ENCODE measurements at regions of chr1 and their contacts with region 1.

Region 1: DNA sequence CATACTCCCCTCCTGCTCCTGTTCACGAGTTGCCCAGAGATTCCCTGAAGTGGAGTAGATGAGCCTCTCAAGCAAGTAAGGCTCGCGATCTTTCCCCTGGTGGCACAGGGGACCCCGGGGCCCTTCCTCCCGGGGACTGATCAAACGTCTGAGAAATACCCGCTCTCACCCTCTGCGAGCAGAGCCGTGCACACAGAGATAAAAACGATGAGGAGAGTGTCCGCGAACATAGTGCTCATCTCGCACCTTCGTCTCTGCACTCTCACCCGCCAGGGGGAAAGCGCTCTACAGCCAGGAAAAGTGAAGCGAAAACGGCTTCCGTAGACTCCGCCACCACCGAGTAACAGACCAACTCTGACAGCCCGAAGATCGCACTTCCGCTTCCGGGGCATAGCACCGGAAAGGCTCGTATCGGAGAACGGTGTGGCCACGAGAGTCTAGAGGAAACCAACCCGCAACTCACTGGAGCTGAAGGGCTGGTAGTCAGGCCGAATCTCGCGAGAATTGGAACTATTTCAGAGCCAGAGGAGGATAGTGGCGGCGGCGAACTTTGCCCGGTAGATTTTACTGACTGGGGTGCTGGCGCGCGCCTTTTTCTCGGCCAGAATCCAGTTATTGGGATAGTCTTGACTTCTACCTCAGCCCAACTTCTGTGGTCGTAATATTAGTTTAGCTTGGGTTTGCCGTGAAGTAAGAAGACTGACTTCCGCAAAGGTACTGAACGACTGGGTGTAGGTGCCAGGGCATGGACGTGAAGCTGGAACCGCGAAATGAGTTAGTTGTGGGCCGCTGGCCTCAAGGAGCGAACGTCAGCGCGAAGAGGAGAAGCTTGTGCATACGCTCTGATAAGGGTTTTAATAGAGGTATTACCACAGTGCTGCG is at the start of gene TMCO1:
- DNase-seq: peak; percentile 96
- ATAC-seq: peak; percentile 99
- H3K4me3 Mint-ChIP-seq: peak within 1 kb of the TSS; percentile 92
- H3K27ac Mint-ChIP-seq: peak within 1 kb of the TSS; percentile 99
- H3K4me1 Mint-ChIP-seq: peaks cover 54% of the 10 kb centered on the region
- H3K27me3 Mint-ChIP-seq: no peaks in the 10 kb centered on the region
- total RNA-seq, gene TMCO1: 57.7 to 70.5 TPM

Region 2: GRCh38 chr1:165827268-165828102 is 58.7 kb after region 1 on chr1 and contains the start of gene UCK2:
- CTCF ChIA-PET with region 1: interaction called, 5 read pairs
- POLR2A ChIA-PET with region 1: interaction called, 9 read pairs
- intact Hi-C with region 1: loop called (anchors 1 kb)
- DNase-seq: peak; percentile 83
- ATAC-seq: peak; percentile 76
- H3K4me3 Mint-ChIP-seq: peak within 1 kb of the TSS; percentile 96
- H3K27ac Mint-ChIP-seq: peak within 1 kb of the TSS; percentile 92
- H3K4me1 Mint-ChIP-seq: peaks cover 13% of the 10 kb centered on the region
- H3K27me3 Mint-ChIP-seq: no peaks in the 10 kb centered on the region
- total RNA-seq, gene UCK2: 69.4 to 81.5 TPM

Region 3: DNA sequence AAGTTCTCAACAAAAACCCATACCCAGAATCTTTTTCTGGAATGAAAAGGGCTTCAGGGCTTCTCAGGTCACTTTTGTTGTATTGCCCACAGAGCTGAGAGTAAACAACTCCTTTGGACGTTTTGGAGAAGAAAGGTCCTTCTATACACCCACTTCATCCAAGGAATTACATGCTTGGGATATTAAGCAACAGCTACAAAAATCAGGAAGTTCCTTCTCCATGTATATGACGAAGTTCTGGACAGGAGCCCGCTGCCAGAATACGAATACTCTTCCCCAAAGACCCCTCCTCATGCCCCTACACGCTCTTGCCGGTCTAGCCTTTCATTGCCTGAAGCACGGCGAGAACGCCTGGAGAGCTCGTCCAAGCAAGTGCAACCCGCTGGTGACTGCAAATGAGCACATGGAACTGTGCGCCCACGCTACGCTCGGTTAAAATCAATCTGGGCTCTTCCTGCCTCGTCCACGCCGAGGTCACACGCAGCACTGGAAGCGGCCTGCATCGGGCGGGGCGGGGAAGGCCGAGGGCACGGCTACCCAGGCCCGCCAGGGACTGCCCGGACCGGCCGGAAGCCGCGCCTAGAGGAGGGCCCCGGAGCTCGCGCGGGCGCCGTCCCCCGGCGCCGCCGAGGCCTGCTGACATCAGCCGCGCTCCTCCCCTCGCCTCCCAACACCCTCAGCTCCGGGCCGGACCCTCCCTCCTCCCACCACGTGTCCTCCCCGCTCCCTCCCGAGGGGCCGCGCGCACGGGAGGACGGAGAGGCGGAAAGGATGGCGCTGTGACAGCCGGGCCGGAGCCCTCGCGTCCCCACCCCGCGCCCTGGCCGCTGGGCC is 1070.2 kb after region 1 on chr1 and contains the start of gene POGK:
- CTCF ChIA-PET with region 1: no interaction called
- POLR2A ChIA-PET with region 1: no interaction called
- intact Hi-C with region 1: loop called in 1 of 2 experiments (anchors 2 kb)
- DNase-seq: peak; percentile 93
- ATAC-seq: peak; percentile 97
- H3K4me3 Mint-ChIP-seq: peak within 1 kb of the TSS; percentile 90
- H3K27ac Mint-ChIP-seq: peak within 1 kb of the TSS; percentile 98
- H3K4me1 Mint-ChIP-seq: peaks cover 56% of the 10 kb centered on the region
- H3K27me3 Mint-ChIP-seq: no peaks in the 10 kb centered on the region
- total RNA-seq, gene POGK: 36.2 to 40.6 TPM

Region 4: GRCh38 chr1:166875734-166876539 is 1107.2 kb after region 1 on chr1 and contains the start of gene TADA1:
- CTCF ChIA-PET with region 1: no interaction called
- POLR2A ChIA-PET with region 1: interaction called, 5 read pairs
- intact Hi-C with region 1: loop called in 1 of 2 experiments (anchors 1 kb)
- DNase-seq: peak; percentile 100
- ATAC-seq: peak; percentile 91
- H3K4me3 Mint-ChIP-seq: peak within 1 kb of the TSS; percentile 92
- H3K27ac Mint-ChIP-seq: peak within 1 kb of the TSS; percentile 97
- H3K4me1 Mint-ChIP-seq: peaks cover 45% of the 10 kb centered on the region
- H3K27me3 Mint-ChIP-seq: no peaks in the 10 kb centered on the region
- total RNA-seq, gene TADA1: 16.0 to 19.5 TPM

Region 5: GRCh38 chr1:167033646-167034045 is 1264.9 kb after region 1 on chr1:
- CTCF ChIA-PET with region 1: no interaction called
- POLR2A ChIA-PET with region 1: no interaction called
- intact Hi-C with region 1: no loop called
- DNase-seq: no peak
- ATAC-seq: no peak
- H3K4me3 Mint-ChIP-seq: no peak overlapping the region
- H3K27ac Mint-ChIP-seq: no peak overlapping the region
- H3K4me1 Mint-ChIP-seq: no peaks in the 10 kb centered on the region
- H3K27me3 Mint-ChIP-seq: peaks cover 7% of the 10 kb centered on the region